ENCODE measurements at regions of chr1 and their contacts with region 1.

Region 1: GRCh38 chr1:109667452-109668122 is at the start of gene GSTM2:
- DNase-seq: peak; percentile 80
- ATAC-seq: peak; percentile 100
- H3K4me3 ChIP-seq: peak within 1 kb of the TSS; percentile 56 to 70 (median 58)
- H3K27ac ChIP-seq: no peak within 1 kb of the TSS
- H3K4me1 ChIP-seq: peaks cover 13% of the 10 kb centered on the region
- H3K27me3 ChIP-seq: no peaks in the 10 kb centered on the region
- CTCF ChIP-seq: peak; percentile 18; the same call in 1 of the 2 replicates
- EP300 ChIP-seq: no peak
- POLR2A ChIP-seq: peak in 1 of 2 experiments; percentile 44; a peak in 1 of 4 replicates
- RAD21 ChIP-seq: no peak
- total RNA-seq, gene GSTM2: 6.5 and 7.0 TPM in 2 replicates

Region 2: DNA sequence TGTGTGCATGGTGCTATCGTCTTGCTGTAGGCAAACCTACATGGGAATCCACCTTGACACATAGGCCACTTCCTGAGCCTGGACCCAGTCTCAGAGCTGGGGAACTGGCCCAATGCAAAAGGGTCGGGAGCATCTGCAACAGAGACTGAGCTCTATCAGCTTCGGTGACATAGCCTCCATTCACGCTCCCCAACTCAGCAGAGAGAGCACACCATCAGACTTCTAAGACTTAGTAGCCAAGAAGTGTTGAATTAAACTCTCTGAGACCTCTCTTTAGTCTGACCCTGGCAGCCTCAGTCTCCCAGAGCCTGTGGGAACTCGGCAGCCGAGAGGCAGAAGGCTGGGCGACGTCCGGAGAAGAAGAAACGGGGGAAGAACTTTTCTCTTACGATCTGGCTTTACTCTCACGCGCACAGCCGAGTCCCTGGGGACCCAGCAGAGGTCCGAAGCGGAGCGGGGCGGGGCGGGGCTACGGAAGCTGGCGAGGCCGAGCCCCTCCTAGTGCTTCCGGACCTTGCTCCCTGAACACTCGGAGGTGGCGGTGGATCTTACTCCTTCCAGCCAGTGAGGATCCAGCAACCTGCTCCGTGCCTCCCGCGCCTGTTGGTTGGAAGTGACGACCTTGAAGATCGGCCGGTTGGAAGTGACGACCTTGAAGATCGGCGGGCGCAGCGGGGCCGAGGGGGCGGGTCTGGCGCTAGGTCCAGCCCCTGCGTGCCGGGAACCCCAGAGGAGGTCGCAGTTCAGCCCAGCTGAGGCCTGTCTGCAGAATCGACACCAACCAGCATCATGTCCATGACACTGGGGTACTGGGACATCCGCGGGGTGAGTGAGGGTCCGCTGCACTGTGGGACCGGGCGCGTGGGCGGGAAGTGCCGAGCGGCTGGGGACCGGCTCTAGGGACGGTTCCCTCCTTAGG is 11.7 kb before region 1 on chr1 and contains the start of gene GSTM4:
- CTCF ChIA-PET with region 1: no interaction called
- POLR2A ChIA-PET with region 1: interaction called, 10 read pairs
- in situ Hi-C with region 1: no loop called
- intact Hi-C with region 1: no loop called
- DNase-seq: peak; percentile 59
- ATAC-seq: peak; percentile 97
- H3K4me3 ChIP-seq: peak within 1 kb of the TSS; percentile 83 to 88 (median 86)
- H3K27ac ChIP-seq: peak within 1 kb of the TSS; percentile 59
- H3K4me1 ChIP-seq: peaks cover 35% of the 10 kb centered on the region
- H3K27me3 ChIP-seq: 0 out of 5 replicates have a peak, but pooled peaks cover 0 to 4% of the 10 kb centered on the region in 2 experiments
- CTCF ChIP-seq: peak; percentile 55; the same call in 1 of the 2 replicates
- EP300 ChIP-seq: no peak
- POLR2A ChIP-seq: peak in 1 of 2 experiments; percentile 85; a peak in 2 of 4 replicates
- RAD21 ChIP-seq: no peak
- total RNA-seq, gene GSTM4: 25.3 and 30.6 TPM in 2 replicates

Region 3: GRCh38 chr1:109687616-109688499 is 20.3 kb after region 1 on chr1 and contains the start of gene GSTM1:
- CTCF ChIA-PET with region 1: no interaction called
- POLR2A ChIA-PET with region 1: no interaction called
- in situ Hi-C with region 1: no loop called
- intact Hi-C with region 1: no loop called
- DNase-seq: no peak
- ATAC-seq: no peak
- H3K4me3 ChIP-seq: no peak within 1 kb of the TSS
- H3K27ac ChIP-seq: no peak within 1 kb of the TSS
- H3K4me1 ChIP-seq: no peaks in the 10 kb centered on the region
- H3K27me3 ChIP-seq: no peaks in the 10 kb centered on the region
- CTCF ChIP-seq: no peak
- EP300 ChIP-seq: no peak
- POLR2A ChIP-seq: no peak
- RAD21 ChIP-seq: no peak
- total RNA-seq, gene GSTM1: not detected in 2 replicates

Region 4: DNA sequence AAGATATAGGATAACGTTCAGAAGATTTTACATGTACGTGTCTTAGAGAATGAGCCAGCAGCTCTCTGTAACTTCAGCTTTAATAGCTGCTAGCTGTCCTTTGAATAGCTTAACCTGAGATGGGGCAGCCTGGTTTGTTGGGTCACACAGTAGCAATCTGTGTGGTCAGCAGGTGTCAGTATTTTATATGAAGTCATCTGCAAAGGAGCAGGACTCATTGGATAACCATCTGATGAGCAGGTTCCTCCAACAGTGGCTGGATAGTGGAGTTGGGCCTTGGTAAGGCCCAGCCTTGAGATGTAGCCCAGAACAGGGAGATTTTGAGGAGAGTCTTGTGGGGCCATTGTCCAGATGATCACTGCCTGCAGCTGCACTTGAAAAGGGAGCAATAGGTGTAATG is 50.9 kb after region 1 on chr1:
- CTCF ChIA-PET with region 1: no interaction called
- POLR2A ChIA-PET with region 1: no interaction called
- in situ Hi-C with region 1: loop called (anchors 10 kb)
- intact Hi-C with region 1: no loop called
- DNase-seq: peak; percentile 65
- ATAC-seq: peak; percentile 93
- H3K4me3 ChIP-seq: no peak overlapping the region
- H3K27ac ChIP-seq: no peak overlapping the region
- H3K4me1 ChIP-seq: no peaks in the 10 kb centered on the region
- H3K27me3 ChIP-seq: peaks cover 3 to 35% of the 10 kb centered on the region in 2 experiments; a peak in 3 of 5 replicates
- CTCF ChIP-seq: peak; percentile 75
- EP300 ChIP-seq: no peak
- POLR2A ChIP-seq: no peak
- RAD21 ChIP-seq: 0 out of 2 replicates have a peak, but pooled peaks have one; percentile 25

Measured in HepG2 (cell line).